RWPE1 (cell line): ENCODE measurements at regions of chr4 and their contacts with region 1.

Region 1: GRCh38 chr4:155999725-156000124 is 46.1 kb upstream of the CTSO start:
- DNase-seq: no peak
- H3K27ac ChIP-seq: no peak overlapping the region
- CTCF ChIP-seq: no peak

Region 2: DNA sequence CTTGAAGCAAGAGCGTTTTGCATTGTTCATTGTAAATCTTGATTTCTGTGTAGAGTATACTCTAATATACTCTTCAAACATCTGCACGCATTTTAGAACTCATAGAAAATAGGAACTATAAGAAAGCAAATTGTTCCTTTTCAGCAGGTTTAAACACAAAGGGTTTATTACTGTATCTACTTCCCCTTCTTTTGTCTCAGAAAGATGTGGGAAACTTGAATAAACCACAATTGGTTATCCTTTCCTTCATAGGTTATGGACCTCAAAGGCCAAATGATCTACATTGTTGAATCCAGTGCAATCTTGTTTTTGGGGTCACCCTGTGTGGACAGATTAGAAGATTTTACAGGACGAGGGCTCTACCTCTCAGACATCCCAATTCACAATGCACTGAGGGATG is 286.9 kb before region 1 on chr4:
- CTCF ChIA-PET with region 1: no interaction called
- POLR2A ChIA-PET with region 1: no interaction called
- DNase-seq: no peak
- H3K27ac ChIP-seq: no peak overlapping the region
- CTCF ChIP-seq: no peak

Region 3: DNA sequence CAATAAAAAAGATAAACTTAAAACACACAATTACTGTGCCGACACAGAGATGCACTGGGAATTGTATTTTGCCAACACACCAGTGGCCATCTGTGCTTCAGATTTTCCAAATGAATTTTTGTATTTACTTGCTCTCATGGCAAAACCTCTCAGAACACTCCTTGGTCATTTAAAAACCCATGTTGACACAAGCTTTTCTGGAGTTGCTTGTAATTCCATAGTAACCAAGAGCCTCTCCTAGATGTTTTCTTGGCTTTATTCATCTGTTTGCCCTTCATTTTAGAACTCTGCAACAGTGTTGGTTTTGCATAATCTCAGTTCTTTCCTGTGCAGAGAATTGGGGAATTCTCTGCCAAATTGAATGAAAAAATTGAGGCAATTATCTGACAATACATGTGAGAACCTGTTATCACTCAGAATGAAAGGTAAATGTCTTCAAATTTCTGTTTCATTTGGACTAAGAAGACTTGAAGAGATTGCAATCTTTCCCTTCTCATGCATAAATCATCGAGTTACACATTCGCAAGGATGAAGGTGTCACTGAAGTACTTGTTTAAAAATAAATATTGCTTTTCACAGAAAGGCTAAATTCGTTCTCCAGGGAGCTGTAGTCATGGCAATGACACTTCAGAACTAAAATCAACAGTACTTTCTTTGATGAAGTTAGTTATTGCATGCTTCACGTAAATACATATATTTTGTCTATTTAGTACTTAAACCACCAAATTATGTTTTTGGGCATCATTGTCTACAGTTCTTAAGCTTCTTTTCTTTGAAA is 255.7 kb after region 1 on chr4:
- CTCF ChIA-PET with region 1: interaction called, 10 read pairs
- POLR2A ChIA-PET with region 1: no interaction called
- DNase-seq: no peak
- H3K27ac ChIP-seq: no peak overlapping the region
- CTCF ChIP-seq: no peak